ENCODE measurements at regions of chr6 and their contacts with region 1.

Region 1: DNA sequence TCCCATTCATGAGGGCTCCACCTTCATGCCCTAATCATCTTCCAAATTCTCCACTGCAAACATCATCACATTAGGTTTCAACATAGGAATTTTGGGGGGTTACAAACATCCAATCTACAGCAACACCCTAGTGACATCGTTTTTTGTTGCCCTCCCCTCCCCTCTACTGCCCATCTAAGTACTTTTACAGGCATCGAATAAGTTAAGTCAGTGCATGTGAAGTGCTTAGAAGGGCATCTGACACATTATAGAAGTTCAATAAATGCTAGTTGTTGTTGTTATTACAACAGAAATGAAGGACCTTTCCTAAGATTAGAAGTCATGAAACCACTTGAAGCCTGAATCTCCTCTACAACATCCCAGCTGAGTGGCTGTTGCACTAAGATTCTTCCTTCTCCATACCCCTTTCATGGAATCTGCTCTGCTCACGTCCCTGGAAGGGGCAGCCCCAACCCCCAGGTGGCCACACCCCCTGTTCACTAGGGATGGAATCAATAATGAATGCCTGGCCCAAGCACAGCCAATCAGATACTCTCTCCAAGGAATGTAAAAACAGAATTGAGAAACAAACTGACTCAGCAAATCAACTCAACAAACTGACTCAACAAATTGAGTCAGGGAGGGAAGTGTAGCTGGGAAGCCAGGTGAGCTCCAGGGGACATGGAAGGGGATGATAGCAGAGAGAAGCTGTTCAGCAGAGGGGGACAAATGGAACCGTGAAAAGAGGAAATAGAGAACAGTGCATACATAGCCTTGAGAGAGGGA is 3.9 kb upstream of the LRP11 start:
- DNase-seq: no peak
- H3K4me3 ChIP-seq: no peak overlapping the region
- H3K27ac ChIP-seq: no peak overlapping the region
- H3K4me1 ChIP-seq: peaks cover 8 to 22% (median 15%) of the 10 kb centered on the region in 6 donors
- H3K27me3 ChIP-seq: peaks cover 0 to 12% (median 0%) of the 10 kb centered on the region in 7 donors
- CTCF ChIP-seq: no peak
- POLR2A ChIP-seq: no peak

Region 2: GRCh38 chr6:149925974-149926777 is 58.1 kb after region 1 on chr6:
- intact Hi-C with region 1: loop called (anchors 2 kb)
- DNase-seq: peak; percentile 90
- H3K4me3 ChIP-seq: peak overlapping the region; percentile 17 to 64 (median 34)
- H3K27ac ChIP-seq: peak overlapping the region in 3 of 8 donors; percentile 4 to 40 (median 15)
- H3K4me1 ChIP-seq: peaks cover 0 to 35% (median 29%) of the 10 kb centered on the region in 6 donors
- H3K27me3 ChIP-seq: peaks cover 0 to 98% (median 39%) of the 10 kb centered on the region in 7 donors
- CTCF ChIP-seq: peak; percentile 53 to 96 (median 77)
- POLR2A ChIP-seq: no peak

Measured in spleen (tissue), 13 donors.